ENCODE measurements at regions of chr3 and their contacts with region 1.

Region 1: DNA sequence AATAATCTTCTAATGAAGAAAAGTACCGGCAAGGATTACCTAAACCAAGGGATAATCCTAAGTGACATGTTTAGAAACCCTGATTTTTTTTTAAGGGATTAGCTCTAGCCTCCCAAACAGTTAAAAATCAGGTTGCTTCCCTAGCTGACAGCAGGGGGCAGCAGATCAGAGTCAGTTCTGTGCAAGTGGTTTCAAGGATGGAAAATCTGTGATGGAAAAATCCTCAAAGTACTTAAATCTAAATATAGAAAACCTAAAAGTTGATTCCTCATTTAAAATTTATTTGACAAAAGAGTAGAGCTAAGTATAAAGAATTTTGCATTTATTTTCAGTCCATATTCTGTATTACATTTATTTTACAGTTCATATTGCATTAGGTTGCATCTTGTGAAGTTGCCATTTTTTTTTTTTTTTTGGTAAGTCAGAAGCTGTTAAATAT is 107.6 kb downstream of the PEX5L start:
- DNase-seq: no peak
- ATAC-seq: no peak
- H3K4me3 ChIP-seq: no peak overlapping the region
- H3K27ac ChIP-seq: no peak overlapping the region
- H3K4me1 ChIP-seq: no peaks in the 10 kb centered on the region
- H3K27me3 ChIP-seq: no peaks in the 10 kb centered on the region
- CTCF ChIP-seq: peak in 4 of 5 experiments; percentile 24 to 58 (median 31)
- POLR2A ChIP-seq: no peak

Region 2: DNA sequence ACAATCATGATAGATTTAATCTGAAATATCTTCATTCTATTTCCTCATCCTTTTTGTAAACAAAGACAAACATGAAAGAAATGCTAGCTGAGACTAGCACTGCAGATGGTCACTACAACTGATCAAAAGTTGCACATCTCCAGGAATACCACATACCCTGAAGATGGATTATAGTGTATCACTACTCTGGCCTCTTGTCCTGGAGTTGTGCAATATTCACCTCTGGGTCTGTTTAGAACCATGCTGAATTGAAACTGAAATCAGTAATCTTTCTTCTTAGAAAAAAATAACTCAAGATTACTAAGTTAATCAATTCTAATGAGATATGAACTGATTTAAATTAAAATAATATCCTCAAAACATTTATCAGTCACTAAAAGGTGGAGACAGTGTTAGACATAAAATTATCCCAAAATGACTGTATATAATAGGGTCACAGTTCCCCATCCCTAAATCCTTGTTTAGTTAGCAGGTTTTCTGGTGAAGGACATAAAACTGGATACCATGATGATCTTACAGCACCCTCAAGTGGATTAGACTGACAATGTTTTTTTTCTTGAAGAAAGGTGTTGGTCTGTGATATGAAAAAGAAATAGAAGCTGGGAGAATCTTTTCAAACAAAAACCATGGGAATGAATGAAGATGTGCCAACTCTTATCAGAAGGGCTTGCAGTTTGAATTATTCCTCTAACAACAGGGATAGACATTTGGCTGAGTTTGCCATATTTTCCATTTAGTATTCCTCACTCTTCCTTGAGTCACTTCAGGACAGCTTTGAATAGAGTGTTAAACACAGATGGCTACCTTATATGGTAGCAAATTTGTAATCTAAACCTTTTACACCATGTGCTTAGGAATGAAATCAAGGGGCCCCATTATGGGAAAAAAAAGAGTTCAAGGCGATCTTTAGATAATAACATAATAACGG is 665.8 kb after region 1 on chr3:
- in situ Hi-C with region 1: loop called in 1 of 4 experiments (anchors 10 kb)
- intact Hi-C with region 1: no loop called
- DNase-seq: no peak
- ATAC-seq: no peak
- H3K4me3 ChIP-seq: no peak overlapping the region
- H3K27ac ChIP-seq: no peak overlapping the region
- H3K4me1 ChIP-seq: no peaks in the 10 kb centered on the region
- H3K27me3 ChIP-seq: no peaks in the 10 kb centered on the region
- CTCF ChIP-seq: no peak
- POLR2A ChIP-seq: no peak